ENCODE measurements at regions of chr12 and their contacts with region 1.

Region 1: DNA sequence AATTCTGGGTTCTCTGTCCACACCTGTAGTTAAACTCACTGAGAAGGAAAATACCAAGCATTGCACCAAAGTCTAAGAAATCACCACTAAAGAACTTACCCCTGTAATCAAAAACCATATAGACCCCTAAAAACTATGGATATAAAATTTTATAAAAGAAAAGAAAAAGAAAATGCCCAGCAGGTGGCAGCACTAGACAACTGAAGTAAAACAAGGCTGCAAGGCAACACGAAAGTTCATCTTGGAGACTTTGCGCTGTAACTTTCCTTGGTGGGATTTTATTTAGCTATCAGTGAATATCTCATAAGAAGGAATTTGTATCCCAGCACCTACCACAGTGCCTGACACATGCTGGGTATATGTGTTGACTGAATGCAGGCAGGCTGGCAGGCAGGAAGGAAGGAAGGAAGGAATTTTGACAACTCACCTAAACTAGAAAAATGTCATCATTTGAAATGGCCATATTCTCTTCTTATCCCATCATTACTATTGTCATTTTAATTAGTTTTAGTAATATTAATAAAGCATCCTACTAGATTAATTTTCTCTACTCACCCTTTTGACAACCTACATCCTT is 68.2 kb upstream of the ETV6 start:
- DNase-seq: peak; percentile 38
- CTCF ChIP-seq: peak; percentile 27

Region 2: DNA sequence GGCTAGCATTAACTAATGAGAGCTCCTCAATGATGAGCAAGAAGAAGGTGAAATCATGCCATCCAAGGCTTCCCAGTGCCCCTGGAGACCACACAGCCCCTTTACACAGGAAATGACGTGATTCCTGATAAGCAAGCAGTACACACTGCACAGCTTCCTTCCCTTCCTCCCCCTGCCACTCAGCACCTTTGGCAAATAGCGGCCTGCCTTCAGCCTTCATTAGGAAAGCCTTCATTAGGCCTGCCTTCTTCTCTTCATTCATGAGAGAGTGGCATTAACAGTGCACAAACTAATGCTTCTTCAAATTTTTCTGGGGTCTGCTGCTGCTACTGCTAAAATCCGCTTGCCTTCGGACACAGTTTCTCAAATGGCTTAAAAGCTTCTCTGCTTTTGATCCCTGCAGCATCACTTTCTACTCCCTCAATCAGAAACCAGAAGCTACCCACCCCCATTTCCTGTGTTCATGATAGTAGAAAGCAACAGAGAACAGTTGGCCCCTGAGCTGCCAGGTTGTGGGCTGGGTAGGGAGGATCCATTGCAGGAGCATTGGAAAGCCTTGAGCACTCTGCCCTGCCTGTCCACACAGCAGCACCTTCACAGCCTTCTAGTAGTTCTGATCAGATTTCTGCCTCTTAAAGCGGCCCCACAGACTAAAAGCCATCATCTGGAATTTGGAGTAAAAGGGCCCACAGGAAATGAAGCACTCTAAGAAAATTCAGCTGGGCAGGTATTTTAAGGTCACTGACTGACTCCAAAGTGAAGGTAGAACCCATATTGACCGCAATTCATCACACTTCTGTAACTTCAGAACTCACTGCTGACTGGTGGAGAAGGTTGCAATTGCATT is 35.6 kb before region 1 on chr12:
- CTCF ChIA-PET with region 1: interaction called, 18 read pairs
- POLR2A ChIA-PET with region 1: no interaction called
- DNase-seq: peak; percentile 68
- CTCF ChIP-seq: no peak

Region 3: GRCh38 chr12:11561411-11561810 is 19.9 kb before region 1 on chr12:
- CTCF ChIA-PET with region 1: interaction called, 32 read pairs
- POLR2A ChIA-PET with region 1: no interaction called
- DNase-seq: no peak
- CTCF ChIP-seq: no peak

Region 4: DNA sequence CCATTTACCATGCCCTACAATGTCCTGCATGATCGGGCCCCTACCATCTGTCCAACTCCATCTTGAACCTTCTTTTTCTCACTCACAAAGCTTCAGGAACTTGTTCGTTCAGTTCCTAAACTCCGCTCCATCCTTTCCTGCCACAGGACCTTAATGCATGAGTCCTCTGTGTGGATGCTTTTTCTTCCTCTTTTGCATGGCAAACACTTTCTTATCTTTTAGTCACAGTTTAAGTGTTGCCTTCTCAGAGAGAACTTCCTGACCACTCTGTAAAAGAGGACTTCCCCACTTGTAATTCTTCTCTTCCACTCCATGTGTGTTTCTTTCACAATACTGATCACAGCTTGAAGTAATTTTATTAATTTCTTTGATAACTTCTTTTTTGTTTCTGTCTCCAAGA is 13.8 kb after region 1 on chr12:
- CTCF ChIA-PET with region 1: interaction called, 33 read pairs
- POLR2A ChIA-PET with region 1: no interaction called
- DNase-seq: no peak
- CTCF ChIP-seq: no peak

Region 5: DNA sequence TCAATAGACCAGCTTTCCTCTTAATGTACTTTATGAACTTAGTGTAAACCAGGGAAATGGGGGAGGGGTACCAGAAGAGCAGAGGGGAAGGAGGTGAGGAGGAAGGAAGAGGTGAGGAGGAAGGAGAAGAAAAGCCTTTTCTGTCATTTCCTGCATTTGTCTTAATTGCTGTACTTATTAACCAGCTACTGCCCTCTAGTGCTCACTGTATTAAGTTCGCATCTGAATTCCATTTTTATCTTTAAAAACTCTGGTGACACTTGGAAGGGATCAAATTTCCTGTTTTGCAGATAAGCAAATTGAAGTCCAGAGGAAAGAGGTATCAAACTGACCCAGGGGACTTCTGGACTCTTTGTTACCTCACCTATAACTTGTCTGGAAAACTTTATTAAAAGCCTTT is 746.5 kb after region 1 on chr12:
- CTCF ChIA-PET with region 1: interaction called, 18 read pairs
- POLR2A ChIA-PET with region 1: no interaction called
- DNase-seq: peak; percentile 65
- CTCF ChIP-seq: peak; percentile 74

Region 6: GRCh38 chr12:12764824-12765223 is 1183.6 kb after region 1 on chr12:
- CTCF ChIA-PET with region 1: no interaction called
- POLR2A ChIA-PET with region 1: no interaction called
- DNase-seq: no peak
- CTCF ChIP-seq: no peak

Measured in GM10248 (cell line).